ENCODE measurements at regions of chr2 and their contacts with region 1.

Region 1: DNA sequence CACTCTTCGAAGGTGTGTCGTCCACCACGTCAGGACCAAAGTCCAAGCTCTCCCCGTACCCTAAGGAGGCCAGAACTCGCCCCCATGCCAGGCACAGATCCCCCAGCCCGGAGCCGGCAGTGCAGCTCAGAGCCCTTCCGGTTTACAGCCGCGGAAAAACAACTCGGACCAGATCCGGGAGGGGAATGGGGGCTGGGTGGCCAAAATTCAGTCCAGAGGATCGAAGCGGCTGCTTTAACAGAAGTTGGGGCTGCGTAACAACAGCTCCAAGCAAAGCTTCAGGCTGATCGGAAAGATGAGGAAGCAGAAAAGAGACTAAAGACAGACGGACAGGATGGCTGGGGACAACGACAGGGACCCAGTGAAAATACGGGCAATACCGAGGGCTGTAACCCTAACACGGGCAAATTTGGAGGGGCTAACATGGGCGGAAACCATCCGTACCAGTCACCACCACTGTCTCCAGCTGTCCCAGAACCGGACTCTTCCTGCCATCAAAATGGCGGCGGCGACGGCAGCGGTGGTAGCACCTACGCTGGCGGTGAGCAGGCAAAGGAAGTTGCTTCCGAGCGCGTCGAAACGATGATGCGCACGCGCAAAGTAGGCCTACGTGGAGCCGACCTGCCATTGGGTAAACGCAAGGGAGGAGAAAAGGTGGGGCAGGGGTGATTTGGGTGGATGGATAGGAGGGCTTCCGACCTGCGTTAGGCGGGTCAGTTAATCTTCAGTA is at the start of gene MMADHC:
- DNase-seq: peak; percentile 91
- H3K4me3 Mint-ChIP-seq: peak within 1 kb of the TSS; percentile 99
- H3K27ac Mint-ChIP-seq: peak within 1 kb of the TSS; percentile 98
- H3K4me1 Mint-ChIP-seq: peaks cover 36% of the 10 kb centered on the region
- H3K27me3 Mint-ChIP-seq: peaks cover 15% of the 10 kb centered on the region
- total RNA-seq, gene MMADHC: 125 and 126 TPM in 2 replicates

Region 2: GRCh38 chr2:148020111-148021058 is 1567.0 kb before region 1 on chr2 and contains the start of gene ORC4:
- intact Hi-C with region 1: loop called (anchors 2 kb)
- DNase-seq: peak; percentile 94
- H3K4me3 Mint-ChIP-seq: peak within 1 kb of the TSS; percentile 100
- H3K27ac Mint-ChIP-seq: peak within 1 kb of the TSS; percentile 93
- H3K4me1 Mint-ChIP-seq: peaks cover 44% of the 10 kb centered on the region
- H3K27me3 Mint-ChIP-seq: no peaks in the 10 kb centered on the region
- total RNA-seq, gene ORC4: 25.4 and 31.2 TPM in 2 replicates

Region 3: GRCh38 chr2:149466635-149467034 is 120.8 kb before region 1 on chr2:
- intact Hi-C with region 1: no loop called
- DNase-seq: no peak
- H3K4me3 Mint-ChIP-seq: no peak overlapping the region
- H3K27ac Mint-ChIP-seq: no peak overlapping the region
- H3K4me1 Mint-ChIP-seq: no peaks in the 10 kb centered on the region
- H3K27me3 Mint-ChIP-seq: peaks cover 3% of the 10 kb centered on the region

Region 4: GRCh38 chr2:149507974-149508373 is 79.4 kb before region 1 on chr2:
- intact Hi-C with region 1: no loop called
- DNase-seq: no peak
- H3K4me3 Mint-ChIP-seq: no peak overlapping the region
- H3K27ac Mint-ChIP-seq: no peak overlapping the region
- H3K4me1 Mint-ChIP-seq: no peaks in the 10 kb centered on the region
- H3K27me3 Mint-ChIP-seq: no peaks in the 10 kb centered on the region

Region 5: GRCh38 chr2:149652926-149653325 is 65.5 kb after region 1 on chr2:
- intact Hi-C with region 1: no loop called
- DNase-seq: no peak
- H3K4me3 Mint-ChIP-seq: no peak overlapping the region
- H3K27ac Mint-ChIP-seq: no peak overlapping the region
- H3K4me1 Mint-ChIP-seq: no peaks in the 10 kb centered on the region
- H3K27me3 Mint-ChIP-seq: no peaks in the 10 kb centered on the region

Region 6: DNA sequence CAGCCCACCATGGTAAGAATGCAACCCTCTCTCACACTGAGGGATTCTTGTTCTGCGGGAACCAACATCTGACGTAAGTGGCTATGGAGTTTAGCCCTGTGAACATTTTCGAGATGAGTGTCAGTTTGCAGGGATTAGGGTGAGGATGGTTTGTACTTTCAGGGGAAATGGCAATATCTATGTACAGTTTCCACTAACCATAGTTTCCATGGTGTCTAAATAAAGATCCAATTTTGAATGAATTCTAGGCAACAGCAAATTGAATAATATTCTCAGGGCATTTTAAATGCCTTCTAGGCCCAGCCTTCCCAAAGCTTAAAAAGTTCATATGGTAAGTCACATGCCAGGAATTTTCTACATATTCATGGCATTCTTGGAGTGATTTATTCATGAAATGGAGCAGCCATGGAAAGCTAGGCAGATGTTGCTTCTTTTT is 105.6 kb after region 1 on chr2:
- intact Hi-C with region 1: no loop called
- DNase-seq: no peak
- H3K4me3 Mint-ChIP-seq: no peak overlapping the region
- H3K27ac Mint-ChIP-seq: no peak overlapping the region
- H3K4me1 Mint-ChIP-seq: no peaks in the 10 kb centered on the region
- H3K27me3 Mint-ChIP-seq: no peaks in the 10 kb centered on the region

Region 7: GRCh38 chr2:151261231-151261976 is 1674.0 kb after region 1 on chr2 and contains the start of gene RBM43:
- intact Hi-C with region 1: loop called (anchors 2 kb)
- DNase-seq: peak; percentile 86
- H3K4me3 Mint-ChIP-seq: peak within 1 kb of the TSS; percentile 92
- H3K27ac Mint-ChIP-seq: peak within 1 kb of the TSS; percentile 97
- H3K4me1 Mint-ChIP-seq: peaks cover 23% of the 10 kb centered on the region
- H3K27me3 Mint-ChIP-seq: no peaks in the 10 kb centered on the region
- total RNA-seq, gene RBM43: 2.6 and 2.8 TPM in 2 replicates

Region 8: GRCh38 chr2:151409601-151410484 is 1822.5 kb after region 1 on chr2 and contains the start of gene RIF1:
- intact Hi-C with region 1: loop called (anchors 5 kb)
- DNase-seq: peak; percentile 68
- H3K4me3 Mint-ChIP-seq: peak within 1 kb of the TSS; percentile 93
- H3K27ac Mint-ChIP-seq: peak within 1 kb of the TSS; percentile 92
- H3K4me1 Mint-ChIP-seq: peaks cover 17% of the 10 kb centered on the region
- H3K27me3 Mint-ChIP-seq: peaks cover 2% of the 10 kb centered on the region
- total RNA-seq, gene RIF1: 67.1 and 72.1 TPM in 2 replicates

Measured in activated T-helper 2 cell treated with anti-CD3 and anti-CD28 coated beads, Interferon-gamma antibody, Interleukin-2, Interleukin-4, amounts not matched to agents 10 μg/mL and 5 μg/mL and 100 μg/mL, durations not matched to agents 14 hours and 24 hours and 36 hours (primary cell).